PC-9 (cell line): ENCODE measurements at regions of chr3 and their contacts with region 1.

Region 1: DNA sequence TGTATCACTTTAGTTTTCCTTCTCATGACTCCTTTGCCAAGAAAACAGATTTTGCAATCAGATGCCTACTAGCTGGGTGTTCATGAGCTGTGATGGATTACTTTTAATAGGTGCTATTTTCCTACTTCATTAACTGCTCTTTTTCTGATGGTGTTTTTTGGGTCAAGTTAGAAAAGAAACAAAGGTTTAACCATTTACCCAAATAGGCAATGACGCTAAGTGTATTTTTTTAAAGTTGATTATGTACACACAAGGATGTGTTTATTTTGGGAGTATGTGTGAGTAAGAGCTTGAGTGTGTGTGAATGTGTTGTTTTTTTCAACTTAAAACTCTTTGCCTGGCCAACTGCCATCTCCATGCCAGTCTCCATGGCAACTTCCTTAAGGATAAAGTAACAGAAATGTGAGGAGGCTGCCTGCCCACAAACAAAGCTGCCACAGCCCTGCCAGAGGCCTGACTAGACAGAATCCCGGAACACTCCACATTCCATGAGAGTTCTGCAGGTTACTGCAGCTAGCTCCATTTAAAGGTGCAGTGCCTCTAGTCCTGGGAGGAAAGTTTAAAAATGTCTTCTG is 215.6 kb upstream of the RBMS3 start:
- DNase-seq: peak; percentile 52 to 87
- H3K4me3 ChIP-seq: no peak overlapping the region
- H3K27ac ChIP-seq: no peak overlapping the region
- H3K4me1 ChIP-seq: no peaks in the 10 kb centered on the region
- H3K27me3 ChIP-seq: no peaks in the 10 kb centered on the region
- CTCF ChIP-seq: no peak

Region 2: GRCh38 chr3:29186982-29187725 is 121.9 kb after region 1 on chr3:
- CTCF ChIA-PET with region 1: no interaction called
- POLR2A ChIA-PET with region 1: interaction called, 4 read pairs
- intact Hi-C with region 1: loop called (anchors 5 kb)
- DNase-seq: peak in 1 of 2 experiments; percentile 40
- H3K4me3 ChIP-seq: no peak overlapping the region
- H3K27ac ChIP-seq: peak overlapping the region; percentile 47
- H3K4me1 ChIP-seq: peaks cover 13% of the 10 kb centered on the region; the same call in 1 of the 2 replicates
- H3K27me3 ChIP-seq: no peaks in the 10 kb centered on the region
- CTCF ChIP-seq: no peak

Region 3: GRCh38 chr3:29280404-29281093 is 215.3 kb after region 1 on chr3 and contains the start of gene RBMS3:
- CTCF ChIA-PET with region 1: no interaction called
- POLR2A ChIA-PET with region 1: no interaction called
- intact Hi-C with region 1: no loop called
- DNase-seq: peak in 1 of 2 experiments; percentile 66
- H3K4me3 ChIP-seq: peak within 1 kb of the TSS; percentile 43; the same call in 1 of the 2 replicates
- H3K27ac ChIP-seq: no peak within 1 kb of the TSS
- H3K4me1 ChIP-seq: no peaks in the 10 kb centered on the region; the same call in 1 of the 2 replicates
- H3K27me3 ChIP-seq: no peaks in the 10 kb centered on the region
- CTCF ChIP-seq: peak; percentile 27; the same call in 1 of the 2 replicates
- total RNA-seq, gene RBMS3: 3.5 and 3.9 TPM in 2 replicates